ENCODE measurements at regions of chr16 and their contacts with region 1.

Region 1: DNA sequence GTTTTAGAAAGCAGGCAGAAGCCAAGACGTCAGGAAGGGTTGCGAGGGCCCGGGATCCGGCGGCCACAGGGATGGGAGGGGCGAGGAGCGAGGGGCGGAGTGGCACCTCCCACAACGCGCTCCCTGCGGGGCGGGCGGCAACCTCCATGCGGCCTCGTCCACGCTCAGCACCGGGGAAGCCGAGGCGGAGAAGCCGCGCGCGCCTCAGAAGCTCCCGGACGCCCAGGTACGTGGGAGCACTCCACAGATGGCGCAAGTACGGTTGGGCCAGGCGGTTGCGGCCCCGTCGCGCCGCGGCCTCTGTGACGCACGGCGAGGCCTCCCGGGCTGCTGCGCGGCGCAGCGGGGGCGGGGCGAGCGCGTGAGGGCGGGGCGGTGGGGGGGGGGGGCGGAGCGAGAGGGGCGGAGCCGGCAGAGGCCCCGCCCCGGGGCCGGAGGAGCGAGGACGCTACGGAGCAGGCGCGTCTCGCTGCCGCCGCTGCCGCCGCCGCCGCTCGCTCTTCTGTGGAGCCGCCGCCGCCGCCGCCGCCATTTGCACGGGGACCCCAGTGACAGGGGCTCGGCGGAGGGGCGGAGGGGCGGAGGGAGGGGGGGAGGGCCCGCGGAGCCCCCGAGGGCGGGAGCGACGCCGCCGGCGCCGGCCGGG is at the start of gene TENT4B:
- DNase-seq: peak; percentile 83 to 85
- H3K4me3 ChIP-seq: peak within 1 kb of the TSS; percentile 80 to 90 (median 87)
- H3K27ac ChIP-seq: peak within 1 kb of the TSS; percentile 85 to 97 (median 90)
- H3K4me1 ChIP-seq: peaks cover 17 to 21% of the 10 kb centered on the region in 2 donors
- H3K27me3 ChIP-seq: no peaks in the 10 kb centered on the region
- CTCF ChIP-seq: no peak
- POLR2A ChIP-seq: peak; percentile 43 to 78
- total RNA-seq, gene TENT4B: 10.0 to 14.7 (median 11.4) TPM

Region 2: DNA sequence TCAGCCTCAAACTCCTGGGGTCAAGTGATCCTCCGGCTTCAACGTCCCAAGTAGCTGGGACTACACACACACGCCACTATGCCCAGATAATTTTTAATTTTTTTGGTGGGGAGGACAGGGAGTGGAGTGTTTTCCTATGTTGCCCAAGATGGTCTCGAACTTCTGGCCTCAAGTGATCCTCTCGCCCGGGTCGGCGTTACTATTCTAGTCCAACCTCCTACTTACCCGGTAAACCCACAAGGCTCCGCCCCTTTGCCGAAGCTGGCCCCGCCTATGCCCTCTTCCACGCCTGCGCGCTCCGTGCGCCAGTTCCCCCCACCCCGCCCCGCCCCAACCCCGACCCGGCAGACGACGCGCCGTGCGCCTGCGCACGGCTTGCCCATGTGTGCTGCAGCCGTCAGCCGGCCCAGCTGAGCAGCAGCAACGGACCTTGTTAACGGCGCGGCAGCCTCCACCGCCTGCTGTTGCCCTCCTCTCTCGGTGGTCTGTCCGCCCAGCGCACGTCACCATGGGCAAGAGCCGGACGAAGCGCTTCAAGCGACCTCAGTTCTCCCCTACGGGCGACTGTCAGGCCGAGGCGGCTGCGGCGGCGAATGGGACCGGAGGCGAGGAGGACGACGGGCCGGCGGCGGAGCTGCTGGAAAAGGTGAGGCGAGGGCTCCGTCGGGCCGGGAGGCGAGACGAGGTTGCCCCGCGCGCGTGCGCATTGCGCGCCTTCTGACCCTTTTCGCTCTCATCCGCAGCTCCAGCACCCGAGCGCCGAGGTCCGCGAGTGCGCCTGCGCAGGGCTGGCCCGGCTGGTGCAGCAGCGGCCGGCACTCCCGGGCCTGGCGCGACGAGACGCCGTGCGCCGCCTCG is 87.1 kb before region 1 on chr16 and contains the start of gene HEATR3:
- intact Hi-C with region 1: loop called (anchors 10 kb)
- DNase-seq: peak; percentile 88
- H3K4me3 ChIP-seq: peak within 1 kb of the TSS; percentile 42 to 99 (median 78)
- H3K27ac ChIP-seq: peak within 1 kb of the TSS; percentile 77 to 93 (median 90)
- H3K4me1 ChIP-seq: peaks cover 4 to 7% of the 10 kb centered on the region in 2 donors
- H3K27me3 ChIP-seq: no peaks in the 10 kb centered on the region
- CTCF ChIP-seq: no peak
- POLR2A ChIP-seq: peak in 1 of 2 donors; percentile 61
- total RNA-seq, gene HEATR3: 12.6 to 24.1 (median 17.9) TPM

Region 3: GRCh38 chr16:50079397-50080140 is 73.4 kb before region 1 on chr16:
- intact Hi-C with region 1: no loop called
- DNase-seq: no peak
- H3K4me3 ChIP-seq: no peak overlapping the region
- H3K27ac ChIP-seq: no peak overlapping the region
- H3K4me1 ChIP-seq: no peaks in the 10 kb centered on the region
- H3K27me3 ChIP-seq: no peaks in the 10 kb centered on the region
- CTCF ChIP-seq: no peak
- POLR2A ChIP-seq: no peak